Heart right ventricle (tissue), 16 donors: ENCODE measurements at regions of chr12 and their contacts with region 1.

Region 1: GRCh38 chr12:9647825-9648700 is 21.4 kb upstream of the CLEC2D start:
- DNase-seq: peak; percentile 80 to 83
- ATAC-seq: peak; percentile 93 to 98 (median 96)
- H3K4me3 ChIP-seq: peak overlapping the region; percentile 52 to 82 (median 70)
- H3K27ac ChIP-seq: peak overlapping the region; percentile 66 to 96 (median 92)
- H3K4me1 ChIP-seq: peaks cover 2 to 39% (median 27%) of the 10 kb centered on the region in 9 donors
- H3K27me3 ChIP-seq: no peaks in the 10 kb centered on the region
- CTCF ChIP-seq: no peak

Region 2: DNA sequence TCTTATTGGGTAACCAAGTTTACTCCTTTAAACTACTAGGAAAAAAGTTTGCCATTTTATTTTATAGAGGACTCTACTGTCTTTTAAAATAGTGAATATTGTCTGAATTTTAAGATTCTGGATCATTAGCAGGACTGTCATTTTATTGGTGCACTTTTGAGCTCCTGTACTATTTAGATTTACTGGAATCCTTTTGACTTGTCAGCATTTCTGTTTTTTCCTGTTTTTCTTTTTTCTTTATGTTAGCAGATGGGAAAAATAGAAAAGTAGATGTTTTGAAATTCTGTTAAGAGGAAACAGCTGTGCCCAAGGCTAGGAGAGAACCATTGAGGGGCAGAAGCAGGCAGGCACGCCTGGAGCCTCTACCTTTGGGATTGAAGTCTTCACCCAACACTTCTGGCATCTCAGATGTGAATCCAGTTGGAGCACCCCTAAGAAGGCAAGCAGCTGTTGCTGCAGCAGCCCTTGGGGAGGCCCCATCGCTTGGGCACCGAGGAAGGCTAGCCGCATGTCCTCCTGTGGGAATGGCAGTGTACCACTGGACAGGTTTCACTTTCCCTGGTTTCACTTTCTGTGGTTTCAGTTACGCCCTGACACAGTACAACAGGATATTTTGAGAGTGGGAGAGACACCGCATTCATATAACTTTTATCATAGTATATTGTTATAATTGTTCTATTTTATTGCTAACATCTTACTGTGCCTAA is 938.8 kb before region 1 on chr12:
- intact Hi-C with region 1: no loop called
- DNase-seq: peak; percentile 24 to 29
- ATAC-seq: peak in 7 of 8 donors; percentile 76 to 89 (median 82)
- H3K4me3 ChIP-seq: peak overlapping the region in 9 of 10 donors; percentile 15 to 48 (median 42)
- H3K27ac ChIP-seq: peak overlapping the region in 9 of 10 donors; percentile 35 to 78 (median 49)
- H3K4me1 ChIP-seq: peaks cover 0 to 53% (median 26%) of the 10 kb centered on the region in 9 donors
- H3K27me3 ChIP-seq: no peaks in the 10 kb centered on the region
- CTCF ChIP-seq: no peak

Region 3: DNA sequence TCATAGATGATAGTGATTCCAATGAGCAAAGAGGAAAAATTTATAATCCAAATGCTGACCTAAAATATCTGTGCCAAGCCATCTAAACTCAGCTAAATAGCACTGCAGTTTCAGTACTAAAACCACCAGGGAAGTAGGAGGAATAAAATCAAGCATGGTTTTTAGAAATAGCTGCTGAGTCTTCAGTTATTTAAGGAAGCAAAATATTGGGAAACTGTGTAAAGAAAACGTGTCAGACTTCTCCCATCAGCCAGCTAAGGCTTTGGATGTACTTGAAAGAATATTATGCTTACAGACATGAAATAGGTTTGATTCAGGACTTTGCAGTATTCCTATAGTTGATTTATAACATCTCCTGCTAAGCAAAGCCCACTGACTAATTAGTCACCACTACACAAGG is 46.2 kb after region 1 on chr12:
- intact Hi-C with region 1: loop called in 1 of 10 experiments (anchors 5 kb)
- DNase-seq: no peak
- ATAC-seq: peak in 1 of 8 donors; percentile 30
- H3K4me3 ChIP-seq: no peak overlapping the region
- H3K27ac ChIP-seq: peak overlapping the region in 1 of 10 donors; percentile 57
- H3K4me1 ChIP-seq: peaks cover 0 to 40% (median 4%) of the 10 kb centered on the region in 9 donors
- H3K27me3 ChIP-seq: no peaks in the 10 kb centered on the region
- CTCF ChIP-seq: no peak

Region 4: DNA sequence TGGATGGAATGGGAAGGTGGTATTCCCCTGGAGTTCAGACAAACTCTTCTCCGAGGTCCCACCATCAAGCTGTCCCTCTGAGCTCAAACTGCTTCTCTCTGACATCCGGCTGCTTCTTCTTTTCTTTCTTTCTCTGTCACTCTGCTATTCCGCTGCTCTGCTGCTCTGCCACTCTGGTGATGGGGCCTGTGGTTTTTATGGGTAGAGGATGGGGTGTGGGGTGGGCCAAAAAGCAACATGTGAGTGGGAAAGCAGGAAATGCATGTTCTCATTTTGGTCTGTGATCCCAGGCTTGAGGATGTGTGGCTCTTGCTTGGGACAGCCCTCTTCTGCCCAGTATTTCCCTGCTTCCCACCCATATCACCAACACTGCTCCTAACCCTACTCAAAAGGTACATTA is 54.2 kb after region 1 on chr12:
- intact Hi-C with region 1: loop called in 3 of 10 experiments (anchors 2 to 5 kb)
- DNase-seq: no peak
- ATAC-seq: peak in 2 of 8 donors; percentile 12 to 44
- H3K4me3 ChIP-seq: no peak overlapping the region
- H3K27ac ChIP-seq: peak overlapping the region in 1 of 10 donors; percentile 48
- H3K4me1 ChIP-seq: peaks cover 0 to 69% (median 21%) of the 10 kb centered on the region in 9 donors
- H3K27me3 ChIP-seq: no peaks in the 10 kb centered on the region
- CTCF ChIP-seq: no peak

Region 5: GRCh38 chr12:9869307-9870161 is 221.5 kb after region 1 on chr12 and contains the start of gene CLEC2B:
- intact Hi-C with region 1: loop called in 1 of 10 experiments (anchors 10 kb)
- DNase-seq: peak in 1 of 2 donors; percentile 9
- ATAC-seq: peak in 7 of 8 donors; percentile 71 to 86 (median 76)
- H3K4me3 ChIP-seq: peak within 1 kb of the TSS; percentile 29 to 66 (median 51)
- H3K27ac ChIP-seq: peak within 1 kb of the TSS; percentile 67 to 96 (median 87)
- H3K4me1 ChIP-seq: peaks cover 0 to 22% (median 7%) of the 10 kb centered on the region in 9 donors
- H3K27me3 ChIP-seq: no peaks in the 10 kb centered on the region
- CTCF ChIP-seq: no peak
- total RNA-seq, gene CLEC2B: 2.6 to 13.9 (median 3.8) TPM